Left ventricle myocardium superior (tissue), 1 donor: ENCODE measurements at regions of chr1 and their contacts with region 1.

Region 1: DNA sequence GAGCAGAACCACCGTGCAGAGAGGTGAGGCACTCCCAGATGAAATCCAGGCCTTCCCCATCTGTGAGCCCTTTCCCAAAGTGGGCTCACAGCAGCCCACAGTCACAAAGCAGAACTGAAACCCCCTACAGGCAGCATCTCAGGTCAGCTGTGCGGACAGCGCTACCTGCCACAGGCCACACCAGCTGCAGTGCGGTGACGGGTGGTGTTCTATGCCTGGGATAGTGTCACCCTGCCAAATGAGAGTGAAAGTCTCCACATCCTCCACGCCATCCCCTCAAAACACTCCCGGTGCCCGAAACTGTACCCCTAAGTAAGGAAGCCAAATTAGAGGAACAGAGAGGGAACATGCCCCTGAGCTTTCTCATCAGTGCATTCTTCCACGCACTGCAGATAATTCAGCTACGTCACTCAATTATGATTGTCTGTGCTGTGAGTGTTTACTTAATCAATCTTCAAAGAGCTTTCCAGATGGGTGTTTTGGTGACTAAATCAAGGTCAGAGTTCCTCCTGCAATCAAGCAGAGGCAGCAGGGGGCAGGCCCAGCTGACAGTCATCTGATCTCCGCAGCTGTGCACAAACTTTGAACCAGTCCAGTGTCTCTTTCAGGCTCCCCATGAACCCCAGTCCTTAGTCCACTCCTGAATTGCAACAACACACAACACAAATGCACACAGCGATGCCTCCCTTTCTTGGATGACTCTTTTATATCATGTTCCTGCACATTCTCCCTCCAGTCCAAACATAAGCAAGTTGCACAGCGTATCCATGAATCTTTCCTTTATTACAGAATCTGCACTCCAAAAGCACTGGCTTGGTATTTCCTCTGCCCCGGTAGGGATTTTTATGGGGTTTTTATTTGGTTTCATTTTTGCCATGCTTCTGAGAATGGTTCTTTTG is 150.0 kb downstream of the TOMM20 start:
- DNase-seq: peak; percentile 64
- ATAC-seq: peak; percentile 41

Region 2: GRCh38 chr1:234533975-234534876 is 444.4 kb before region 1 on chr1:
- intact Hi-C with region 1: loop called (anchors 10 kb)
- DNase-seq: peak; percentile 94
- ATAC-seq: peak; percentile 13

Region 3: GRCh38 chr1:235018161-235018560 is 39.5 kb after region 1 on chr1:
- intact Hi-C with region 1: no loop called
- DNase-seq: no peak
- ATAC-seq: no peak